Activated T-helper 1 cell treated with anti-CD3 and anti-CD28 coated beads, Interleukin-12 subunit alpha, Interleukin-12 subunit beta, Interleukin-2, Interleukin-4 antibody, amounts not matched to agents 30 ng/mL and 10 ng/mL and 1 ng/mL, durations not matched to agents 14 hours and 24 hours and 36 hours (primary cell): ENCODE measurements at regions of chr4 and their contacts with region 1.

Region 1: GRCh38 chr4:95371476-95372224 is 177.1 kb downstream of the UNC5C start:
- DNase-seq: no peak
- H3K4me3 Mint-ChIP-seq: no peak overlapping the region
- H3K27ac Mint-ChIP-seq: no peak overlapping the region
- H3K4me1 Mint-ChIP-seq: no peaks in the 10 kb centered on the region
- H3K27me3 Mint-ChIP-seq: no peaks in the 10 kb centered on the region

Region 2: GRCh38 chr4:94746750-94747149 is 624.9 kb before region 1 on chr4:
- intact Hi-C with region 1: loop called (anchors 10 kb)
- DNase-seq: no peak
- H3K4me3 Mint-ChIP-seq: no peak overlapping the region
- H3K27ac Mint-ChIP-seq: no peak overlapping the region
- H3K4me1 Mint-ChIP-seq: no peaks in the 10 kb centered on the region
- H3K27me3 Mint-ChIP-seq: peaks cover 6% of the 10 kb centered on the region